Adrenal gland (tissue), 19 donors: ENCODE measurements at regions of chr10 and their contacts with region 1.

Region 1: DNA sequence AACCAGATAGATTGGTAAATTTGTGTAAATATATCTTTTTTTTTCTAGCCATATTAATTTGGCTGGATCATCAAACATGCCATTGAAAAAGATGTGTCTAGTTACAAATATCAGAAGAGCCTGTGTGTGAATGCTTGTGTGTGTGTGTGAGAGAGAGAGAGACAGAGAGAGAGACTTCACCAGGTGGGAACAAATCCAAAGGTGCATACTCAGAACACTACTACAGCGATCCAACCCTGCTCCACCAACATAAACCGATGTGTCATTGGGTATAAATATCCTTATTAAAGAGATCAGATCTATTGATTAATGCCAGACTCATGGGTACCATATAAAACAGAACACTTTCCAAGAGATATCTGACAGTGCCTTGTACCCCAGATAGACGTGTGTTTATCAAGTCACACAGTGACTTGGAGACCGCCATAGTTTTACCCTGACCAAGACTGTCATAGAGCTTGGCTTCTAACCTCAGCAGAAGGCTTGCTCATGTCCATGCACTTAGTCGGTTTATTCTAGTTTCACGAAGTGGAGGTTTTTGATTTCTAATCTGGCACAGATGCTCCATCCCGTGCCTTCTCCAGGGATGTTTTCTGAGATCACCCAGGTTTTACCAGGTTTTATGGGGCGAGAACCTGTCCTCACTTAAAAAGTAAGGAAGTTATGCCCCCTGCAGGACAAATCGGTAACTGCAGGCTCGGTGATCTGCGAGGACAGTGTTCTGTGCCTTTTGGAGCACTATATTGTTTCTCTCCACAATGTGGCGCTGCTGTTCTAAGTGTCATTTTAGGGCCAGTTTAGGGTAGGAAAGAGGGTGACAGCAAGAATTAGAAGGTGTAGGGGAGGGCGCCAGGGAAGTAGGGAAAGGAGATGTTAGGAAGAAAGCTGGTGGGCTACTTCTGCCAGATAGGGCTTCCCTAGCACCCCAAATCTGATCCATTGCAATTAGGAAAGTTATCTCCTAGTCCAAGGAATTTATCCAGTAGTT is 29.3 kb upstream of the WNT8B start:
- DNase-seq: peak; percentile 88 to 99 (median 97)
- H3K4me3 ChIP-seq: no peak overlapping the region
- H3K27ac ChIP-seq: no peak overlapping the region
- H3K4me1 ChIP-seq: no peaks in the 10 kb centered on the region
- H3K27me3 ChIP-seq: no peaks in the 10 kb centered on the region
- CTCF ChIP-seq: peak; percentile 99 to 100 (median 100)
- POLR2A ChIP-seq: peak in 1 of 2 donors; percentile 12

Region 2: GRCh38 chr10:100223879-100224278 is 209.7 kb before region 1 on chr10:
- intact Hi-C with region 1: no loop called
- DNase-seq: no peak
- H3K4me3 ChIP-seq: no peak overlapping the region
- H3K27ac ChIP-seq: no peak overlapping the region
- H3K4me1 ChIP-seq: peaks cover 0 to 12% of the 10 kb centered on the region in 2 donors
- H3K27me3 ChIP-seq: no peaks in the 10 kb centered on the region
- CTCF ChIP-seq: no peak
- POLR2A ChIP-seq: no peak

Region 3: GRCh38 chr10:100338434-100339036 is 95.0 kb before region 1 on chr10:
- intact Hi-C with region 1: loop called (anchors 2 kb)
- DNase-seq: peak; percentile 72 to 92 (median 85)
- H3K4me3 ChIP-seq: no peak overlapping the region
- H3K27ac ChIP-seq: no peak overlapping the region
- H3K4me1 ChIP-seq: peaks cover 0 to 9% of the 10 kb centered on the region in 2 donors
- H3K27me3 ChIP-seq: no peaks in the 10 kb centered on the region
- CTCF ChIP-seq: peak; percentile 82 to 95 (median 92)
- POLR2A ChIP-seq: no peak

Region 4: DNA sequence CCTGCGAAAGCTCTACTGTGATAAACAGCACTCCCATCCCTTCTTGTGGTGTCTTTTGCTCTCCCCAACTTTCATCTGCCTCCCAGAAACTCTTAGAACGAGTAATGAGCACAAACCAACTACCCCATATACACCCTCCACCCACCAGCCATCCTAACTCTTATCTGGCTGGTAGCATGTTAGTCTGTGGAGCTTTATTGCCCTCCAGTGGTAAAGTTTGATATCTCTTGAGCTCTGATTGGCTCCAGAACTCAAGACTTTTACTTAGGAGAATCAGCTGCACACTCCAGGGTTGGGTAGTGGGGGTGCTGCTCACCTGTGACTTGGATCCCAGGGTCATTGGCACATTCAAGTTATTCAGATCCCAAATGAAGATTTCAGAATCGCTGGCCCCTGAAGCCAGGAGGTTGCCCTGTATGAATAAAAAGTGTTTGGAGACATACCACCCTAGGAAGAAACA is 75.2 kb after region 1 on chr10:
- intact Hi-C with region 1: loop called (anchors 5 to 10 kb)
- DNase-seq: peak in 1 of 7 donors; percentile 14
- H3K4me3 ChIP-seq: no peak overlapping the region
- H3K27ac ChIP-seq: no peak overlapping the region
- H3K4me1 ChIP-seq: peaks cover 0 to 5% of the 10 kb centered on the region in 2 donors
- H3K27me3 ChIP-seq: no peaks in the 10 kb centered on the region
- CTCF ChIP-seq: peak; percentile 30 to 77 (median 60)
- POLR2A ChIP-seq: no peak

Region 5: DNA sequence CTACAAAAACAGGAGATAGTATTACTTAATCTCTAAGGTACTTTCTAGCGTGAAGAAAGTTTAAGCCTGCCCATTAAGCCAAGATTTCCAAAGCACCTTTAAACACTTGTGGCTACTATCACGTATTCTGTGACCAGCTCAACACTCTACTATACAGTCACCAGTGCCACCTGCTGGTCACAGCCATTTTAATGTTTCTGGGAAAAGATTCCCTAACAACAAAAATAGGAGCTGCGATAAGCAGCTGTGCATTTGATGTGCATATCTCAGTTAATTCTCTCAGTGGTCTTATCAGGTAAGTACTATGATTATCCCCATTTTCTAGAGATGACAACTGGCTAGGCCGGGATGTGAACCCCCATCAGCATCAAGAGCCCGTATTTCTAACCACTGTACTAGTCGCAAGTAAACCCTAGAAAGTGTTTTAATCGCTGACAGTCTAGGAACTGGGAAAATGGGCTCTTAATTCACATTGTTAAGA is 85.3 kb after region 1 on chr10:
- intact Hi-C with region 1: loop called in 1 of 2 experiments (anchors 10 kb)
- DNase-seq: peak; percentile 55 to 91 (median 76)
- H3K4me3 ChIP-seq: peak overlapping the region in 1 of 4 donors; percentile 48
- H3K27ac ChIP-seq: no peak overlapping the region
- H3K4me1 ChIP-seq: peaks cover 0 to 13% of the 10 kb centered on the region in 2 donors
- H3K27me3 ChIP-seq: no peaks in the 10 kb centered on the region
- CTCF ChIP-seq: peak; percentile 48 to 78 (median 74)
- POLR2A ChIP-seq: no peak

Region 6: GRCh38 chr10:100562008-100562711 is 128.6 kb after region 1 on chr10:
- intact Hi-C with region 1: no loop called
- DNase-seq: peak; percentile 75 to 85 (median 78)
- H3K4me3 ChIP-seq: no peak overlapping the region
- H3K27ac ChIP-seq: no peak overlapping the region
- H3K4me1 ChIP-seq: peaks cover 5 to 6% of the 10 kb centered on the region in 2 donors
- H3K27me3 ChIP-seq: peaks cover 18% of the 10 kb centered on the region
- CTCF ChIP-seq: peak; percentile 88 to 99 (median 95)
- POLR2A ChIP-seq: no peak